Posterior vena cava (tissue), 2 donors: ENCODE measurements at regions of chr3 and their contacts with region 1.

Region 1: GRCh38 chr3:44318891-44319311 is 19.7 kb upstream of the TCAIM start:
- DNase-seq: no peak

Region 2: GRCh38 chr3:44845528-44846520 is 526.9 kb after region 1 on chr3:
- intact Hi-C with region 1: loop called in 1 of 2 experiments (anchors 5 kb)
- DNase-seq: no peak